Activated CD4-positive, alpha-beta T cell treated with anti-CD3 and anti-CD28 coated beads for 36 hours (primary cell): ENCODE measurements at regions of chr1 and their contacts with region 1.

Region 1: DNA sequence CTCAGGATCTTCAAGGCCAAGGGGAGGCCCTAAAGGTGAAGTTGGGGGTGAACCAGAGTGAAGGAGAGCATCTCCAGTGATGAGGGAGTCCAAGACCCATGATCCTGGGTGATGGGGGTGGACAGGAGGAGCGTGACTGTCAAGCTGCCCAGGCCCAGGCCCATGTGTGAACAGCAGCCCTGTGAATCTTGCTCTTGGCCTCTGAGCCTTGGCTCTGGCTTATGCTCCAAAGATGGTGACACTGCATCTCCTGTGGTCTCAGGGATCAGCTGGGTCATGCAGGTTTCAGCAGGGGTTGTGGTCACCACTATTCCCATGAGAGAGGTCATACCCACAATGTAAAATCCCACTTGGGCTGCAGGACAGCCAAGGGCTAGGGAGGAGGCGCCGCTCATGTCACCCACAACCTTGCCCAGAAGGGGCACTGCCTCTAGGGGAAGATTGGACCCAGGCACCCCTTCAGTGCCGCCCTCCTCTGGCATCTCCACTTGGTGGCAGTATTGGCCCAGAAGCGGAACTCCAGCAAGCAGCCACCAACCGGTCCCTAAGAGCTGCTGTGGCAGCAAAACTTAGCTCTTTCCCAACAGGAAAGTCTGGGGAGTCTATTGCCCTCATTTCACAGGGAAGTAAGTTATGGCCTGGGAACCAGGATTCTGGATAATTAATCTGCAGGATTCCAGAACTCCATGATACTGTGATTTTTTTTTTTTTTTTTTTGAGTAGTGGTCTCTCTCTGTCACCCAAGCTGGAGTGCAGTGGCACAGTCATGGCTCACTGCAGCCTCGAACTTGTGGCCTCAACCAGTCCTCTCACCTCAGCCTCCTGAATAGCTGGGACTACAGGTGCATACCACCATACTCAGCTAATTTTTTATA is 7.5 kb upstream of the WNT3A start:
- DNase-seq: peak; percentile 87
- ATAC-seq: peak; percentile 98
- H3K4me3 Mint-ChIP-seq: no peak overlapping the region
- H3K27ac Mint-ChIP-seq: no peak overlapping the region
- H3K4me1 Mint-ChIP-seq: no peaks in the 10 kb centered on the region
- H3K27me3 Mint-ChIP-seq: peaks cover 18% of the 10 kb centered on the region

Region 2: DNA sequence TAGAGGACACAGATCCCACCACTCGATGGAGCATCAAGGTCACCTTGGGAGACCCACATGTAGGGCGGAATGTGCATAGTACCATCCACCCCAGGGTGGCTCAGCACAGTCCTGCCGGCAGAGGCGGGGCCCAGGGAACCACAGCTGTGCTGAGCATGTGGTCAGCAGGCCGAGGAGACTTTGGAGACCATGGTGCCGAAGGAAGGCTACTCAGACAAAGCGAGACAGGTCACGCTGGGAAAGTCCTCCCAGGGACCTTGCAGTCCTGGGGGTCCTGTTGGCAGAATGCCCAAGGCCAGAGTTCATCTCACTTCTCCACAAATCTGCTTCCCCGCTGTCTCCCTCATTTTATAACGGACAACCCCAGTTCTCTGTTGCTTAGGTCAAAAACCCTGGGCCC is 30.0 kb after region 1 on chr1:
- CTCF ChIA-PET with region 1: no interaction called
- POLR2A ChIA-PET with region 1: no interaction called
- intact Hi-C with region 1: no loop called
- DNase-seq: no peak
- ATAC-seq: no peak
- H3K4me3 Mint-ChIP-seq: no peak overlapping the region
- H3K27ac Mint-ChIP-seq: no peak overlapping the region
- H3K4me1 Mint-ChIP-seq: no peaks in the 10 kb centered on the region
- H3K27me3 Mint-ChIP-seq: peaks cover 20% of the 10 kb centered on the region

Region 3: DNA sequence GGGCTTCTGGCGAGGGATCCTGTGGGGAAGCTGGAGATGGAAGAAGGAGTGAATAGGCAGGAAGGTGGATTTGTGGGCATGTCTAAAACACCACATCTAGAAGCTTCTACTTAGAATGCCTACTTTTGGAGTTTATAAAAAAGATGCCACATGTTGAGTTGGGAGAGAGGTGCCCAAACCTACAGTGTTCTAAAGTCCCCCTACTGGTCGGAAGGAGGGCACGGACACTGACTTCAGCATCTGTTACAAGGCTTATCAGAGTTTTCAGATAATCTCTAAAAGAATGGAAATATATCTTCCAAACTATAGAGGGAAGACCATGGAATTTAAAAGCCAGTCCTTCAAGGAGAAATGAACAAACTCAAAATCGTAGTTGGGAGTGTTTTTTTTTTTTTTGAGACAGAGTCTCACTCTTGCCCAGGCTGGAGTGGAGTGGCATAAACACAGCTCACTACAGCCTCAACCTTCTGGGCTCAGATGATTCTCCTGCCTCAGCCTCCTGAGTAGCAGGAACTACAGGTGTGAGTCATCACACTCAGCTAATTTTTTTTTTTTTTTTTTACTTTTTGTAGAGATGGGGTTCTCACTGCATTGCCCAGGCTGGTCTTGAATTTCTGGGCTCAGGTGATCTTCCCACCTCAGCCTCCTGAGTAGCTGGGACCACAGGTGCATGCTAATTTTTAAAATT is 181.1 kb after region 1 on chr1:
- CTCF ChIA-PET with region 1: no interaction called
- POLR2A ChIA-PET with region 1: no interaction called
- intact Hi-C with region 1: loop called in 1 of 2 experiments (anchors 5 kb)
- DNase-seq: peak; percentile 13
- ATAC-seq: peak; percentile 55
- H3K4me3 Mint-ChIP-seq: no peak overlapping the region
- H3K27ac Mint-ChIP-seq: no peak overlapping the region
- H3K4me1 Mint-ChIP-seq: peaks cover 3% of the 10 kb centered on the region
- H3K27me3 Mint-ChIP-seq: no peaks in the 10 kb centered on the region